ENCODE measurements at regions of chr9 and their contacts with region 1.

Region 1: GRCh38 chr9:23123048-23123632 is 676.5 kb downstream of the DMRTA1 start:
- DNase-seq: no peak

Region 2: DNA sequence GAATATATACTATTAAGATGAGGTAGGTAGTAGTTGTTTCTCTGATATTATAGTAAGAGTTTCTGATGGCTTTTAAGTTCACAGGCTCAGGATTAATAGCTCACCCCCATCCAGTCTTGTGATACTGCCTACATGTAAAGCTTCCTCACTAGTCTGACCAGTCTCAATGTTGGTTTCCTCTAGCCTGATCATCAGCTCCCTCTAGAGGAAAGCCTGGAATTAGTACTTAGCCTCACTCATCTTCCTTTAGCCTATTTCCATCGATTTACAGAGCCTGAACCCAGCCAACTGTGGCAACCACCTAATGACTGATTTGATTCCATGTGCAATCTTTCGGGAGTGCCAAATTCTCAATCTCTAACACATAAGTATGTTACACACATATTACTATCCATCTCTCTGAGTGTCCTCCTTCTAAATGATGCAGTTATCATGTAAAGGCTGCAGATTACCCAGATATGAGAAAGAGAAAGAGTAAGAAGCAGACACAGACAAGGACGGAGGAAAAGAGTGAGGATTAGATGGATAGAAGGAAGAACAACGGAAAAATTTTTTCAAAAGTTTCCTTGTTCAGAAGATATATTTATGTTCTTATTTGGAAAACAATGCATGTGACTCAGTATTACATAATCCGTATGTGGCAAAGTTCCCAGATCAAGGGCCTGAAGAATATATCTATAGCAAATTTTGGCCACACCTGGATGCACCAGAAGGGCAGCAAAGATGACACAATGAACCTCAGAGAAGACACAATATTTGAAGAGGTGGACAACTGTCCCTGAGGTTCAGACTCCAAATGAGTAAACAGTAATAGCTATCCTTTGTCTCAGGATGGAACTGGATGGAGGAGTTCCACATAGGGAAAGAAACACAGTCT is 369.2 kb after region 1 on chr9:
- intact Hi-C with region 1: loop called (anchors 10 kb)
- DNase-seq: no peak

Region 3: GRCh38 chr9:23887781-23888180 is 764.6 kb after region 1 on chr9:
- intact Hi-C with region 1: loop called (anchors 10 kb)
- DNase-seq: no peak

Measured in cardiac septum (tissue), 1 donor.